Gastrocnemius medialis (tissue), 4 donors: ENCODE measurements at regions of chr9 and their contacts with region 1.

Region 1: GRCh38 chr9:71675129-71675856 is 93.0 kb downstream of the CEMIP2 start:
- DNase-seq: no peak
- ATAC-seq: no peak
- H3K4me3 ChIP-seq: no peak overlapping the region
- H3K27ac ChIP-seq: no peak overlapping the region
- H3K4me1 ChIP-seq: peaks cover 1 to 7% of the 10 kb centered on the region in 2 donors
- H3K27me3 ChIP-seq: no peaks in the 10 kb centered on the region
- CTCF ChIP-seq: no peak
- POLR2A ChIP-seq: no peak

Region 2: DNA sequence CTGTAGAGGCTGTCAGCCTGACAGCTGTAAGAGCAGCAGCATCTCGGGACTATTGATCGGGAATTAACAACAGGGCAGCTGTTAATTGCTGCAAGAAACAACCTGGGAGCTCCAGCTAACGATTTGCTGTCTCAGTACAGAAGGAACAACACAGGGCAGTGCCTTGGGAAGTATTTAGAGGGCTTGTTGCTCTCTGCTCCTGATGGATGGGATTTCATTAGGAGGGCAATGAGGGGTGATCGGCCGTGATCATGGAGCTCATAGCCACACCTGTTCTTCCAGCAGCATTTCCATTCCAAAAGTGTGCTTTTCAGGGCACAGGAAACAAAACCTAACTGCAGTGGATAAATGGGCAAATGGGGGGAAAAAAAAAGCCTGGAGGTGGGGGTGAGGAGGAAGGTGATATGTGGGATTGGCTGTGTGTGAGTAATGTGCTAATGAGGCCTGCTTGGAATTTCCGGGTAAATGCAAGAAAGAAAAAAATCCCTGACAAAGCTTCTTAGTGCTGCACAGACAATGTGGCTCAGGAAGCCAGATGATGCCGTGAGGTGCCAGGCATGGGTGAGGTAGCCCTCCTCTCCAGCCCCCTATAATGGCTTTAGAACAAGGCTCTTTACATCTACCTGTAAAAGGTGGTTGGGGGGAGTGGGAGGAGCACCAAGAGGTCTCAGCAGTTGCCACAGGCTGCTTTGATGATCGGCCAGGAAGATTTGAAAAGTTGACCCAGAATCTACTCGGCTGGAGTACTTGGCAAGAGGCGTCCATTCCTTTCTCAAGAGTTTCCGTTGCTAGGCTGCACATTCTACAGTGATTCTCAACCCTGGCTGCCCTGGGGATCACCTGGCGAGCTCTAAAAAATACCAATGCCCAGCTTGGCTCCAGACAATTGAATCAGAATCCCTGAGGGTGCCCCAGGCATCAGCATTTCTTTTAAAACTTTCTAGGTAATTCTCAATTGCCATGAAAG is 1121.3 kb before region 1 on chr9:
- in situ Hi-C with region 1: no loop called
- intact Hi-C with region 1: no loop called
- DNase-seq: no peak
- ATAC-seq: no peak
- H3K4me3 ChIP-seq: no peak overlapping the region
- H3K27ac ChIP-seq: no peak overlapping the region
- H3K4me1 ChIP-seq: peaks cover 7 to 13% of the 10 kb centered on the region in 2 donors
- H3K27me3 ChIP-seq: no peaks in the 10 kb centered on the region
- CTCF ChIP-seq: no peak
- POLR2A ChIP-seq: no peak

Region 3: DNA sequence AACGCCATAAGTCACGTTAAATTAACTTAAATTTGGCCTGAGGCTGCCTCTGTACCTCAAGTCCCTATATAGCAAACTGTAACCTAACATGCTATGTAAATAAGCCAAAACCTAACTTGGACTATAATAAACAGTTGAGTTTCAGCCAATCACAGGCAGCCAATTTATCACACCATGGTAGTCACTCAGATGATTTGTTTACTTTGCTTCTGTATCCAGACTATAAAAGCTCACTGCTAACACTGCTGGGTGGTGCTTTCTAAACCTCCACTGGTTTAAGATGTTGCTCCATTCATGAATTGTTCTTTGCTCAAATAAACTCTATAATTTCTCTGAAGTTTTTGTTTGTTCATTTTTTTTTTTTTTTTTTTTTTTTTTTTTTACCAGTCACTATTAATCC is 616.6 kb before region 1 on chr9:
- in situ Hi-C with region 1: no loop called
- intact Hi-C with region 1: no loop called
- DNase-seq: no peak
- ATAC-seq: no peak
- H3K4me3 ChIP-seq: no peak overlapping the region
- H3K27ac ChIP-seq: no peak overlapping the region
- H3K4me1 ChIP-seq: no peaks in the 10 kb centered on the region
- H3K27me3 ChIP-seq: no peaks in the 10 kb centered on the region
- CTCF ChIP-seq: no peak
- POLR2A ChIP-seq: no peak

Region 4: GRCh38 chr9:71646131-71646530 is 29.2 kb before region 1 on chr9:
- in situ Hi-C with region 1: no loop called
- intact Hi-C with region 1: loop called (anchors 1 kb)
- DNase-seq: no peak
- ATAC-seq: no peak
- H3K4me3 ChIP-seq: no peak overlapping the region
- H3K27ac ChIP-seq: no peak overlapping the region
- H3K4me1 ChIP-seq: peaks cover 0 to 18% of the 10 kb centered on the region in 2 donors
- H3K27me3 ChIP-seq: no peaks in the 10 kb centered on the region
- CTCF ChIP-seq: no peak
- POLR2A ChIP-seq: no peak